Psoas muscle (tissue), 8 donors: ENCODE measurements at regions of chr11 and their contacts with region 1.

Region 1: GRCh38 chr11:133339495-133340140 is 192.7 kb downstream of the OPCML start:
- DNase-seq: no peak
- ATAC-seq: no peak
- H3K4me3 ChIP-seq: no peak overlapping the region
- H3K27ac ChIP-seq: no peak overlapping the region
- H3K4me1 ChIP-seq: no peaks in the 10 kb centered on the region
- H3K27me3 ChIP-seq: no peaks in the 10 kb centered on the region
- CTCF ChIP-seq: no peak

Region 2: DNA sequence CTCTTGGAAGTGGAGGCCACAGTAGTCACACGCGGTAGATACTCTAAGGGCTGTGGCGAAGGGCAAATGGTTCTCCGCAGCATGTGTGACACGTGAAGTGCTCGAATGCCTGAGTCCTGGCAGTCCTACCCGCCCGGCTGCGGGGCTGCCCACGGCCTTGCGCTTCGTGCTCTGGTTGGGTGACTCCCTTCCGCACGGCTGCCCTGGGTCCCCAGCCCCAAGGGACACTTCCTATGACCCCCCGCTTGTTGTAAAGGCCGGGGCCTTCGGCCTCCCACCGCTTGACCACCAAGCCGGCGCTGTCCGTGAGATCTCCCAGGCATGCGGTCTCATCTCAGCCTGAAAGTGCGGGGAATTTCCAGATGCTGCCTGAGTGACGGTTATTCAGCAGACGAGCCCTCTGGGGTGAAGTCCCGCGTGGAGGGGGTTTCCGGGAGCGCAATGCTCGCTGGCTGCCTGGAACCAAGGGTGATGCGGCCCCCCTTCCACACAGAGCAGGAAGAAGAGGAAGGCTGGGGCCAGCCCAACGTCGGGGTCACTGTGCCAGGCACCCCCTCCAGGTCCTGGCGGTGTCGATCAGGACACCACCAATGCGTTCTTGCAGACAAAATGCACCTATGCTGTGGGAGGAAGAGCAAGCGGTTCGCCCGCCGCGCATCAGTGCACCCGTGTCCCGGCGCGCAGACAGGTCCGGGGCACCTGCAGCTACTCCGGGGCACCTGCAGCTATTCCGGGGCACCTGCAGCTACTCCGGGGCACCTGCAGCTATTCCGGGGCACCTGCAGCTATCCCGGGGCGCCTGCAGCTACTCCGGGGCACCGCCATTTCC is 21.5 kb after region 1 on chr11:
- intact Hi-C with region 1: loop called in 1 of 2 experiments (anchors 1 kb)
- DNase-seq: no peak
- ATAC-seq: no peak
- H3K4me3 ChIP-seq: no peak overlapping the region
- H3K27ac ChIP-seq: no peak overlapping the region
- H3K4me1 ChIP-seq: no peaks in the 10 kb centered on the region
- H3K27me3 ChIP-seq: peaks cover 0 to 6% (median 0%) of the 10 kb centered on the region in 3 donors
- CTCF ChIP-seq: no peak